ENCODE measurements at regions of chr20 and their contacts with region 1.

Region 1: DNA sequence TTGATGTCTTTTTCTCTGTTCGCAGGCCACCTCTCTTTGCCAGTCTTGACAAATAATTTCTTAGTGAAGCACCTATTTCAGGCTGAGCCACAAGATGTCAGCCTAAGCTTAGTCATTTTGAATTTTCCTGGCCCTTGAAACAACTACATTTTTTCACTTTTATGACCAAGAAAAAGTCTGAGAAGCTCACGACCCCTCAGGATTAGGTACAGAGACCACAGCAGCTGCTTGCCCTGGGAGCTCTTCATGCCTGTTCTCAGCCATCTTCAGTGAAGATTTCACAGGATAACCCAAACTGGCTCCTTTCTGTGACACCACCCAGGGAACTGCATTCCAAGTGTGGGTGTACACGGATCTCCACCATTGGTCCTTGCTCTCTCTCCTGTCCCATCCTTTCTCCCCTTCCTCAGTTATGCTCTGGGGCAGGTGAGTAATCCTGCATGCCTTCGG is 38.4 kb upstream of the SPTLC3 start:
- DNase-seq: peak; percentile 36
- H3K4me3 Mint-ChIP-seq: no peak overlapping the region
- H3K27ac Mint-ChIP-seq: no peak overlapping the region
- H3K4me1 Mint-ChIP-seq: peaks cover 10% of the 10 kb centered on the region
- H3K27me3 Mint-ChIP-seq: no peaks in the 10 kb centered on the region

Region 2: GRCh38 chr20:12012241-12013222 is 957.9 kb before region 1 on chr20:
- CTCF ChIA-PET with region 1: no interaction called
- intact Hi-C with region 1: loop called (anchors 2 kb)
- DNase-seq: peak; percentile 39
- H3K4me3 Mint-ChIP-seq: no peak overlapping the region
- H3K27ac Mint-ChIP-seq: no peak overlapping the region
- H3K4me1 Mint-ChIP-seq: peaks cover 2% of the 10 kb centered on the region
- H3K27me3 Mint-ChIP-seq: peaks cover 2% of the 10 kb centered on the region

Region 3: GRCh38 chr20:12882832-12883506 is 87.4 kb before region 1 on chr20:
- CTCF ChIA-PET with region 1: no interaction called
- intact Hi-C with region 1: no loop called
- DNase-seq: no peak
- H3K4me3 Mint-ChIP-seq: no peak overlapping the region
- H3K27ac Mint-ChIP-seq: no peak overlapping the region
- H3K4me1 Mint-ChIP-seq: no peaks in the 10 kb centered on the region
- H3K27me3 Mint-ChIP-seq: peaks cover 2% of the 10 kb centered on the region

Region 4: DNA sequence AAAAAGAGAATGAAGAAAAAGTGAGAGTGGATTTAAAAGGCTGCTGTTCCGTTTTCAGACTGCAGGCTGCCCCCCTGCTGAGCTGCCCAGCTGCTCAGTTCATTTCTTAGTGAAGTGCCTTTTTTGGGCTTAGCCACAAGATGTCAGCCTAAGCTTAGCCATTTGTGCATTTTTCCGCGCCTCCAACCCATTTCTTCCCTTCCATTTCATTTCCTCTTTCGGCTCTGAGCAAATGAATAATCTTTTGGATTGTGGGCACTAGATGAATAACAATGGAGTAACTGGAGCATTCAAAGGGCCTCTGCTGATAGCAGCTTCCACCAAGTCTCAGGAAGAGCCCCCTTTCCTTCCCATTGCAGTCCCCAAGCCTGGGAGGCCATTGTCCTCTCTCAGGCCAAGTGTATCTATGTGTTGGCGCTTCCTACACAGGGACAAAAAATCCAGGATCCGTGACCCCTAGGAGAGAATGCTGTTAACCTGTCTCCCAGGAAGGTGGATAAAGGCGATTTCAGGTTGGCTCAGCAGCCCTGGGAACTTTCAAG is 45.1 kb before region 1 on chr20:
- CTCF ChIA-PET with region 1: interaction called, 6 read pairs
- intact Hi-C with region 1: loop called (anchors 1 kb)
- DNase-seq: peak; percentile 48
- H3K4me3 Mint-ChIP-seq: no peak overlapping the region
- H3K27ac Mint-ChIP-seq: no peak overlapping the region
- H3K4me1 Mint-ChIP-seq: no peaks in the 10 kb centered on the region
- H3K27me3 Mint-ChIP-seq: peaks cover 10% of the 10 kb centered on the region

Region 5: DNA sequence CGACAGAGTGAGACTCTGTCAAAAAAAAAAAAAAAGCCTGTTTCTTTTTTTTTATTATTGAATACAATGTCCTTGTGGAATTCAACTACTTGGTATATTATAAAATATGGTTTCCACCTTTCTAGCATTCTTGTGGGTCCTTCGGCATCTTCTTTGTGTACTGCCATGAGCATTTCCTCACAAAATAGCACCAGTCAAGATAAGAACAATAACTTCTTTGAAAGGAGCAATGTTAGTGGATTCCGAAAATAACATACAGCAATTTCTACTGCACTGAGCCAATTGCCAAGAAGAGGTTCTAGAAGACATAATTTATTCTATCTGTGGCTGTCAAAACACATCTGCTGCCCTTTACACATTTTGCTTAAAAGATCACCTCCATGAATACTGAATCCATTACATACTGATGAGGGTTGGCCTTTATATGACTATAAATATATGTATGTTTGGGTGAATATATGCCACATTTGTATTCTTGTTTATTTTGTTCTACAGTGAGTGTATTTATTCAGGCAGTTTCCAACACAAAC is 19.3 kb after region 1 on chr20:
- CTCF ChIA-PET with region 1: no interaction called
- intact Hi-C with region 1: no loop called
- DNase-seq: no peak
- H3K4me3 Mint-ChIP-seq: no peak overlapping the region
- H3K27ac Mint-ChIP-seq: no peak overlapping the region
- H3K4me1 Mint-ChIP-seq: no peaks in the 10 kb centered on the region
- H3K27me3 Mint-ChIP-seq: peaks cover 4% of the 10 kb centered on the region

Region 6: GRCh38 chr20:13009682-13010406 is 39.4 kb after region 1 on chr20:
- CTCF ChIA-PET with region 1: interaction called, 5 read pairs
- intact Hi-C with region 1: loop called (anchors 2 kb)
- DNase-seq: peak; percentile 15
- H3K4me3 Mint-ChIP-seq: peak overlapping the region; percentile 57
- H3K27ac Mint-ChIP-seq: peak overlapping the region; percentile 37
- H3K4me1 Mint-ChIP-seq: peaks cover 28% of the 10 kb centered on the region
- H3K27me3 Mint-ChIP-seq: no peaks in the 10 kb centered on the region